ENCODE measurements at regions of chr6 and their contacts with region 1.

Region 1: DNA sequence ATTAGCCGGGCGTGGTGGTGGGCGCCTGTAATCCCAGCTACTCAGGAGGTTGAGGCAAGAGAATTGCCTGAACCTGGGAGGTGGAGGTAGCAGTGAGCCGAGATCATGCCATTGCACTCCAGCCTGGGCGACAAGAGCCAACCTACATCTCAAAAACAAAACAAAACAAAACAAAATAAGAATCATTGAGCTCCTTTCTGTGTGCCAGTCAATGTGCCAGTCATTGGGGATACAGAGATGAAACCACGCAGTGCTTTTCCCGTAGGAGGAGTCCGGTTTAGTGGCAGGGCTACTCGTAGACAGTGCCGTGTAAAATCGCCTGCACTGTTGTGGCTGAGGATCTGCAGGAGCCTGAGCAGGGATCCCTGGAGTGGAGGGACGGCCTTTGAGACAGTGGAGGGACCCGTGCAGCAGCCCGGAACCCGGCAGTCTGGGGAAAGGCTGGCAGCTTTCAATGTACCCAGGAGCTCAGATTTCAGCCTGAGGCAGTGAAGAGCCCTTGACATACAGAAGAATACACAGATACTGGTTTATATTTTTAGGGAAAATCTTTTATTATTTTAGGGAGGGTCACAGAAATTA is 203.2 kb downstream of the ARID1B start:
- DNase-seq: peak; percentile 63 to 76
- H3K4me3 ChIP-seq: peak overlapping the region; percentile 41; the same call in 1 of the 2 replicates
- H3K27ac ChIP-seq: peak overlapping the region; percentile 77
- H3K4me1 ChIP-seq: peaks cover 64% of the 10 kb centered on the region
- H3K27me3 ChIP-seq: no peaks in the 10 kb centered on the region
- CTCF ChIP-seq: no peak

Region 2: GRCh38 chr6:156953479-156954146 is 26.8 kb before region 1 on chr6:
- CTCF ChIA-PET with region 1: no interaction called
- POLR2A ChIA-PET with region 1: no interaction called
- intact Hi-C with region 1: loop called (anchors 5 kb)
- DNase-seq: peak; percentile 56 to 93
- H3K4me3 ChIP-seq: no peak overlapping the region; the same call in 1 of the 2 replicates
- H3K27ac ChIP-seq: peak overlapping the region; percentile 35
- H3K4me1 ChIP-seq: peaks cover 40% of the 10 kb centered on the region
- H3K27me3 ChIP-seq: no peaks in the 10 kb centered on the region
- CTCF ChIP-seq: 0 out of 2 replicates have a peak, but pooled peaks have one; percentile 16

Region 3: GRCh38 chr6:157184202-157185020 is 204.0 kb after region 1 on chr6:
- CTCF ChIA-PET with region 1: no interaction called
- POLR2A ChIA-PET with region 1: interaction called, 11 read pairs
- intact Hi-C with region 1: no loop called
- DNase-seq: peak in 1 of 2 experiments; percentile 38
- H3K4me3 ChIP-seq: no peak overlapping the region
- H3K27ac ChIP-seq: no peak overlapping the region
- H3K4me1 ChIP-seq: peaks cover 48% of the 10 kb centered on the region
- H3K27me3 ChIP-seq: no peaks in the 10 kb centered on the region
- CTCF ChIP-seq: peak; percentile 72

Region 4: GRCh38 chr6:157244175-157244574 is 263.8 kb after region 1 on chr6:
- CTCF ChIA-PET with region 1: no interaction called
- POLR2A ChIA-PET with region 1: no interaction called
- intact Hi-C with region 1: no loop called
- DNase-seq: no peak
- H3K4me3 ChIP-seq: no peak overlapping the region
- H3K27ac ChIP-seq: no peak overlapping the region
- H3K4me1 ChIP-seq: no peaks in the 10 kb centered on the region
- H3K27me3 ChIP-seq: no peaks in the 10 kb centered on the region
- CTCF ChIP-seq: no peak